PC-3 (cell line): ENCODE measurements at regions of chrX and their contacts with region 1.

Region 1: GRCh38 chrX:79477691-79478090 is 110.6 kb upstream of the ITM2A start:
- DNase-seq: peak; percentile 12
- ATAC-seq: no peak; the same call in 1 of the 2 replicates
- H3K4me3 ChIP-seq: no peak overlapping the region
- H3K27ac ChIP-seq: no peak overlapping the region
- H3K4me1 ChIP-seq: no peaks in the 10 kb centered on the region
- H3K27me3 ChIP-seq: no peaks in the 10 kb centered on the region
- CTCF ChIP-seq: peak; percentile 31; the same call in 1 of the 2 replicates

Region 2: GRCh38 chrX:79515529-79515928 is 37.8 kb after region 1 on chrX:
- CTCF ChIA-PET with region 1: no interaction called
- POLR2A ChIA-PET with region 1: no interaction called
- intact Hi-C with region 1: no loop called
- DNase-seq: no peak
- ATAC-seq: no peak
- H3K4me3 ChIP-seq: no peak overlapping the region
- H3K27ac ChIP-seq: no peak overlapping the region
- H3K4me1 ChIP-seq: no peaks in the 10 kb centered on the region
- H3K27me3 ChIP-seq: no peaks in the 10 kb centered on the region
- CTCF ChIP-seq: 0 out of 2 replicates have a peak, but pooled peaks have one; percentile 11

Region 3: DNA sequence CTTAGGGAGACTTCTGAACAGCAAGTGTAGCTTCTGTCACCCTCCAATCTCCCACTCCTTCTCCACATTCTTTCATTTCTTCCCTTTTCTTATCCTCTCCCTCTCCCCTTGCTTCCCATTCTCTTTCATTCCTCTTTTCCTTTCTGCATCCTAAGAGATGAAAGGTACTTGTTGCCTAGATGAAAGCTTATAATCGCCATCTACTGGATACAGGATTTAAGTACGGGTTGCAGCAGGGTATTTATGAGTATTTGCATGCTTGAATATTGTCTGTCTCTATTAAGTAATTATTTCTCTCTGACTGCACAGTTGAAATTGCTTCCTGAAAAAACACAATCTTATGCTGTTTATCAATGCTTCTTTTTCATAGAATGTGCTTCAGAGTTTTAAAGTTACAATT is 768.6 kb after region 1 on chrX:
- CTCF ChIA-PET with region 1: no interaction called
- POLR2A ChIA-PET with region 1: no interaction called
- intact Hi-C with region 1: loop called (anchors 5 kb)
- DNase-seq: peak; percentile 21
- ATAC-seq: peak; percentile 65
- H3K4me3 ChIP-seq: no peak overlapping the region
- H3K27ac ChIP-seq: no peak overlapping the region
- H3K4me1 ChIP-seq: no peaks in the 10 kb centered on the region
- H3K27me3 ChIP-seq: no peaks in the 10 kb centered on the region
- CTCF ChIP-seq: peak; percentile 56